CD4-positive, alpha-beta T cell (primary cell): ENCODE measurements at regions of chr15 and their contacts with region 1.

Region 1: GRCh38 chr15:38017721-38018120 is 83.3 kb downstream of the TMCO5A start:
- DNase-seq: peak in 2 of 14 experiments; percentile 41 to 59
- ATAC-seq: no peak
- H3K4me3 ChIP-seq: no peak overlapping the region
- H3K4me3 Mint-ChIP-seq: no peak overlapping the region
- H3K27ac ChIP-seq: no peak overlapping the region
- H3K27ac Mint-ChIP-seq: no peak overlapping the region
- H3K4me1 ChIP-seq: no peaks in the 10 kb centered on the region
- H3K4me1 Mint-ChIP-seq: no peaks in the 10 kb centered on the region
- H3K27me3 ChIP-seq: no peaks in the 10 kb centered on the region
- H3K27me3 Mint-ChIP-seq: no peaks in the 10 kb centered on the region
- CTCF ChIP-seq: no peak

Region 2: GRCh38 chr15:37733628-37734027 is 284.1 kb before region 1 on chr15:
- CTCF ChIA-PET with region 1: no interaction called
- POLR2A ChIA-PET with region 1: no interaction called
- intact Hi-C with region 1: no loop called
- DNase-seq: no peak
- ATAC-seq: no peak
- H3K4me3 ChIP-seq: no peak overlapping the region
- H3K4me3 Mint-ChIP-seq: no peak overlapping the region
- H3K27ac ChIP-seq: no peak overlapping the region
- H3K27ac Mint-ChIP-seq: no peak overlapping the region
- H3K4me1 ChIP-seq: no peaks in the 10 kb centered on the region
- H3K4me1 Mint-ChIP-seq: no peaks in the 10 kb centered on the region
- H3K27me3 ChIP-seq: no peaks in the 10 kb centered on the region
- H3K27me3 Mint-ChIP-seq: peaks cover 8% of the 10 kb centered on the region
- CTCF ChIP-seq: no peak

Region 3: GRCh38 chr15:37837276-37837675 is 180.4 kb before region 1 on chr15:
- CTCF ChIA-PET with region 1: no interaction called
- POLR2A ChIA-PET with region 1: no interaction called
- intact Hi-C with region 1: no loop called
- DNase-seq: no peak
- ATAC-seq: no peak
- H3K4me3 ChIP-seq: no peak overlapping the region
- H3K4me3 Mint-ChIP-seq: no peak overlapping the region
- H3K27ac ChIP-seq: no peak overlapping the region
- H3K27ac Mint-ChIP-seq: no peak overlapping the region
- H3K4me1 ChIP-seq: no peaks in the 10 kb centered on the region
- H3K4me1 Mint-ChIP-seq: no peaks in the 10 kb centered on the region
- H3K27me3 ChIP-seq: no peaks in the 10 kb centered on the region
- H3K27me3 Mint-ChIP-seq: peaks cover 7% of the 10 kb centered on the region
- CTCF ChIP-seq: no peak

Region 4: GRCh38 chr15:38072348-38073177 is 54.8 kb after region 1 on chr15:
- CTCF ChIA-PET with region 1: no interaction called
- POLR2A ChIA-PET with region 1: no interaction called
- intact Hi-C with region 1: no loop called
- DNase-seq: peak in 3 of 14 experiments; percentile 32 to 36 (median 32)
- ATAC-seq: peak; percentile 49
- H3K4me3 ChIP-seq: peak overlapping the region; percentile 47
- H3K4me3 Mint-ChIP-seq: peak overlapping the region; percentile 62
- H3K27ac ChIP-seq: no peak overlapping the region
- H3K27ac Mint-ChIP-seq: no peak overlapping the region
- H3K4me1 ChIP-seq: peaks cover 10% of the 10 kb centered on the region
- H3K4me1 Mint-ChIP-seq: peaks cover 12% of the 10 kb centered on the region
- H3K27me3 ChIP-seq: peaks cover 7 to 34% of the 10 kb centered on the region in 2 experiments
- H3K27me3 Mint-ChIP-seq: peaks cover 55% of the 10 kb centered on the region
- CTCF ChIP-seq: no peak

Region 5: DNA sequence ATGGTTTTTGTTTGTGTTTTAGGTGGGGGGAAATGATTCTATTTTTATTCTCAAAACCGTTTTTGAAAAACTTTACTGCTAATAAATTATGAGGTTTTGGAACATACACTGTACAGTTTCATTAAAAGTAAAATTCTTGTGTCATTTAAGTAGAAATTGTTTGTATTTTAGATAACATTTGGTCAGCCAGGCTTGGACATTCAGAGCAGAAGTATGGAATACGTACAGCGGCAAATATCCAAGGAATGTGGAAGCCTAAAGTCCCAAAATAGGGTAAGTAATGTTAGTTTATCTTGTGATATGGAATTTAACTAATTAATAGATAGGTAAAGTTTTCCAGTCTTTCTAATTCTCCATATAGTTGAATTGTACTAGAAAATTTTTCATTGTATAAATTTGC is 331.5 kb after region 1 on chr15:
- CTCF ChIA-PET with region 1: no interaction called
- POLR2A ChIA-PET with region 1: no interaction called
- intact Hi-C with region 1: loop called in 1 of 2 experiments (anchors 5 kb)
- DNase-seq: no peak
- ATAC-seq: no peak
- H3K4me3 ChIP-seq: no peak overlapping the region
- H3K4me3 Mint-ChIP-seq: no peak overlapping the region
- H3K27ac ChIP-seq: no peak overlapping the region
- H3K27ac Mint-ChIP-seq: no peak overlapping the region
- H3K4me1 ChIP-seq: no peaks in the 10 kb centered on the region
- H3K4me1 Mint-ChIP-seq: no peaks in the 10 kb centered on the region
- H3K27me3 ChIP-seq: no peaks in the 10 kb centered on the region
- H3K27me3 Mint-ChIP-seq: peaks cover 9% of the 10 kb centered on the region
- CTCF ChIP-seq: no peak